ENCODE measurements at regions of chr14 and their contacts with region 1.

Region 1: GRCh38 chr14:39266871-39267591 is 33.3 kb downstream of the MIA2 start:
- DNase-seq: peak; percentile 75 to 81 (median 78)
- H3K4me3 ChIP-seq: peak overlapping the region; percentile 85 to 94
- H3K4me3 Mint-ChIP-seq: peak overlapping the region; percentile 77 to 98 (median 97)
- H3K27ac ChIP-seq: peak overlapping the region; percentile 86
- H3K27ac Mint-ChIP-seq: peak overlapping the region; percentile 91 to 99 (median 97)
- H3K4me1 ChIP-seq: peaks cover 40% of the 10 kb centered on the region
- H3K4me1 Mint-ChIP-seq: peaks cover 32 to 62% (median 49%) of the 10 kb centered on the region in 4 donors
- H3K27me3 ChIP-seq: no peaks in the 10 kb centered on the region
- H3K27me3 Mint-ChIP-seq: no peaks in the 10 kb centered on the region

Region 2: GRCh38 chr14:39102969-39103957 is 163.8 kb before region 1 on chr14 and contains the start of gene SEC23A:
- CTCF ChIA-PET with region 1: no interaction called
- POLR2A ChIA-PET with region 1: interaction called, 9 read pairs
- intact Hi-C with region 1: loop called (anchors 2 kb)
- DNase-seq: peak; percentile 80 to 88 (median 82)
- H3K4me3 ChIP-seq: peak within 1 kb of the TSS; percentile 77 to 89
- H3K4me3 Mint-ChIP-seq: peak within 1 kb of the TSS; percentile 93 to 98 (median 96)
- H3K27ac ChIP-seq: peak within 1 kb of the TSS; percentile 86
- H3K27ac Mint-ChIP-seq: peak within 1 kb of the TSS; percentile 91 to 99 (median 98)
- H3K4me1 ChIP-seq: peaks cover 50% of the 10 kb centered on the region
- H3K4me1 Mint-ChIP-seq: peaks cover 21 to 64% (median 40%) of the 10 kb centered on the region in 4 donors
- H3K27me3 ChIP-seq: no peaks in the 10 kb centered on the region
- H3K27me3 Mint-ChIP-seq: no peaks in the 10 kb centered on the region
- total RNA-seq, gene SEC23A: 61.1 to 70.3 TPM

Region 3: DNA sequence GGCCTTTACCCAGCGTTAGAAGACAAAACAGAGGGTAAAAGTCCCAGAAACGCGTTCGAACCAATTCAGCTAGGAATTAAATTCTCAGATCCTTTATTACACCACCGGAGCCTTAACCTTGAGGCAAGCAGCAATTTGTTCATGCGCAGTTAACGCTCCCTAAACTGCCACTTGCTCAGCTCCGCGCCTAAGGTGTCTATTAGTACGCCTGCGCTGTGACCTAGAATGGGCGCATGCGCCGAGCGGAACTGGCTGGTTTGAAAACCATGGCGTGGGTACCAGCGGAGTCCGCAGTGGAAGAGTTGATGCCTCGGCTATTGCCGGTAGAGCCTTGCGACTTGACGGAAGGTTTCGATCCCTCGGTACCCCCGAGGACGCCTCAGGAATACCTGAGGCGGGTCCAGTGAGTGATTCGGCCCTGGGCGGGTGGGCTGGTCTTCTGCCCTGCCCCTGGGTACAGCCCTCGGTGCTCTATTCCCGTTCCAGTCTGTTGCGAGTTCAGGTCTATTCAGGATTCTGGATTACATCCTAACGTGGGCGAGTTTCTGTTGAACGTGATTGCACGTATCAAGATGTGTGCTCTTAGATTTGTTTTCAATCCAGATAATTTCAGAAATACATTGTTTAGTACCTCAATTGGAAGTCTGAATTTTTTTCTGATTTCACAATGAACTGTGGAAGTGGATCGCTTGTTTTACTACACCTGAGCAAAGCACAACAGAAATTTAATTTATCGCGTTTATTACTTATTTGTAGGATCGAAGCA is 152.8 kb before region 1 on chr14 and contains the start of gene GEMIN2:
- CTCF ChIA-PET with region 1: no interaction called
- POLR2A ChIA-PET with region 1: interaction called, 11 read pairs
- intact Hi-C with region 1: loop called (anchors 2 kb)
- DNase-seq: peak; percentile 92 to 95 (median 94)
- H3K4me3 ChIP-seq: peak within 1 kb of the TSS; percentile 66 to 81
- H3K4me3 Mint-ChIP-seq: peak within 1 kb of the TSS; percentile 92 to 99 (median 97)
- H3K27ac ChIP-seq: peak within 1 kb of the TSS; percentile 80
- H3K27ac Mint-ChIP-seq: peak within 1 kb of the TSS; percentile 93 to 99 (median 97)
- H3K4me1 ChIP-seq: peaks cover 13% of the 10 kb centered on the region
- H3K4me1 Mint-ChIP-seq: peaks cover 12 to 25% (median 17%) of the 10 kb centered on the region in 4 donors
- H3K27me3 ChIP-seq: no peaks in the 10 kb centered on the region
- H3K27me3 Mint-ChIP-seq: peaks cover 2 to 6% of the 10 kb centered on the region in 2 donors
- total RNA-seq, gene GEMIN2: 13.4 to 16.9 TPM

Region 4: GRCh38 chr14:39169541-39169900 is 97.5 kb before region 1 on chr14:
- CTCF ChIA-PET with region 1: interaction called, 9 read pairs
- POLR2A ChIA-PET with region 1: interaction called, 56 read pairs
- intact Hi-C with region 1: loop called (anchors 1 kb)
- DNase-seq: no peak
- H3K4me3 ChIP-seq: peak overlapping the region; percentile 86 to 99
- H3K4me3 Mint-ChIP-seq: peak overlapping the region; percentile 88 to 100 (median 96)
- H3K27ac ChIP-seq: peak overlapping the region; percentile 94
- H3K27ac Mint-ChIP-seq: peak overlapping the region; percentile 93 to 100 (median 99)
- H3K4me1 ChIP-seq: peaks cover 40% of the 10 kb centered on the region
- H3K4me1 Mint-ChIP-seq: peaks cover 35 to 59% (median 48%) of the 10 kb centered on the region in 4 donors
- H3K27me3 ChIP-seq: no peaks in the 10 kb centered on the region
- H3K27me3 Mint-ChIP-seq: no peaks in the 10 kb centered on the region

Region 5: DNA sequence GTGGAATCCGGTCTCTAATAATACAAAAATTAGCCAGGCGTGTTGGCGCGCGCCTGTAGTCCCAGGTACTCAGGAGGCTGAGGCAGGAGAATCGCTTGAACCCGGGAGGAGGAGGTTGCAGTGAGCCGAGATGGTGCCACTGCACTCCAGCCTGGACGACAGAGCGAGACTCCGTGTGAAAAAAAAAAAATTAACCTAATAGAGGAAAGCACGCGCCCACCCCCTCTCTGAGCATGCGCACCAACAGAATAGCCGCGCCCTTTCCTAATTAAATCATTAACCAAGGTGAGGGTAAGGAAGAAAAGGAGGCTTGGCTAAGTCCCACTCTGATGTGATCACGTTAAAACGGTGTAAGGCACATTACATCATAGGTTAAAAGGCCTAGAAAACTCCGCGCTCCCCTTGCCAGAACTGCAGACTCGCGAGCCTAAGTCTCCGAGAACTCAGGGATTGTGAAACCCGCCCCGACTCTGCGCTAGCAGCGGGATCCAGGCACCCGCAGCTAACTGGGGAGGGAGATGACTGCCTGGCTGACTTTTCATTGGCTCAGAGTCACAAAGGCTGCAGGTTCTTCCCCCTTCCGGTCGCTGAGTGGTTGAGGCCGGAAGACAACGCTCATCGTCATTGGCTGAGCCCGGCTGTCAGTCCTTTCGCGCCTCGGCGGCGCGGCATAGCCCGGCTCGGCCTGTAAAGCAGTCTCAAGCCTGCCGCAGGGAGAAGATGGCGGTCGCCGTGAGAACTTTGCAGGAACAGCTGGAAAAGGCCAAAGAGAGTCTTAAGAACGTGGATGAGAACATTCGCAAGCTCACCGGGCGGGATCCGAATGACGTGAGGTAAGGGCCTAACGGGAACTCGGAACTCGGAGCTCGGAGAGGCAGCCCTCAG is 92.2 kb before region 1 on chr14 and contains the start of gene PNN:
- CTCF ChIA-PET with region 1: interaction called, 9 read pairs
- POLR2A ChIA-PET with region 1: interaction called, 56 read pairs
- intact Hi-C with region 1: loop called (anchors 1 kb)
- DNase-seq: peak; percentile 97 to 100 (median 99)
- H3K4me3 ChIP-seq: peak within 1 kb of the TSS; percentile 77 to 92
- H3K4me3 Mint-ChIP-seq: peak within 1 kb of the TSS; percentile 95 to 99 (median 97)
- H3K27ac ChIP-seq: peak within 1 kb of the TSS; percentile 98
- H3K27ac Mint-ChIP-seq: peak within 1 kb of the TSS; percentile 97 to 100 (median 98)
- H3K4me1 ChIP-seq: peaks cover 28% of the 10 kb centered on the region
- H3K4me1 Mint-ChIP-seq: peaks cover 18 to 54% (median 40%) of the 10 kb centered on the region in 4 donors
- H3K27me3 ChIP-seq: no peaks in the 10 kb centered on the region
- H3K27me3 Mint-ChIP-seq: no peaks in the 10 kb centered on the region
- total RNA-seq, gene PNN: 86.0 to 93.8 TPM

Region 6: DNA sequence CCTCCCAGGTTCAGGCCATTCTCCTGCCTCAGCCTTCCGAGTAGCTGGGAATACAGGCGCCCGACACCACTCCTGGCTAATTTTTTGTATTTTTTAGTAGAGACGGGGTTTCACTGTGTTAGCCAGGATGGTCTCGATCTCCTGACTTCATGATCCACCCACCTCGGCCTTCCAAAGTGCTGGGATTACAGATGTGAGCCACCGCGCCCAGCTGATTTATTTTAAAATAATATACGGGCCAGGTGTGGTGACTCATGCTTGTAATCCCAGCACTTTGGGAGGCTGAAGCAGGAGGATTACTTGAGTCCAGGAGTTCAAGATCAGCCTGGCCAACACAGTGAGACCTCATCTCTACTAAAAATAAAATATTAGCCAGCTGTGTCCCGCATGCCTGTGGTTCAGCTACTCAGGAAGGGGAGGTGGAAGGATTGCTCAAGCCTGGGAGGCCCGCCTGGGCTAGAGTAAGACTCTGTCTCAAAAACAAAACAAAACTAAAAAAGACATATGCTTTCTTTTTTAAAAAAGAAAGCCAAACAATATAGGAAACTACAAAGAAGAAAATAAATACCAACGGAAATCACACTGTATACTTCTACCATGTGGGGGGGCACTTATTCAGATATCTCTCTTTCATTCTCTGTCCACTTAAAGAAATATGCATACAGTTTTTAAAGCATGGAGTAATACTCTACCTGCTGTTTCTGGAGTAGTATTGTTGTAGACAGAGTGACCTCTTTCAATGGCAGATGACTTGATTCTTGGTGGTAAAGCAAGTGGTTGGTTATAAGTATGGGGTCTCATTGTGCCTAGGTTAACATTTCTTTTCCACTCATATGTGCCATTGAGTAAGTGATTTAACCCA is 34.2 kb before region 1 on chr14:
- CTCF ChIA-PET with region 1: interaction called, 8 read pairs
- POLR2A ChIA-PET with region 1: interaction called, 35 read pairs
- intact Hi-C with region 1: loop called (anchors 1 kb)
- DNase-seq: peak in 2 of 5 donors; percentile 4 to 10
- H3K4me3 ChIP-seq: no peak overlapping the region
- H3K4me3 Mint-ChIP-seq: peak overlapping the region in 3 of 8 donors; percentile 40 to 60 (median 43)
- H3K27ac ChIP-seq: no peak overlapping the region
- H3K27ac Mint-ChIP-seq: peak overlapping the region in 5 of 7 donors; percentile 28 to 75 (median 63)
- H3K4me1 ChIP-seq: peaks cover 35% of the 10 kb centered on the region
- H3K4me1 Mint-ChIP-seq: peaks cover 24 to 37% (median 31%) of the 10 kb centered on the region in 4 donors
- H3K27me3 ChIP-seq: no peaks in the 10 kb centered on the region
- H3K27me3 Mint-ChIP-seq: no peaks in the 10 kb centered on the region

Region 7: GRCh38 chr14:39310051-39310450 is 43.0 kb after region 1 on chr14:
- CTCF ChIA-PET with region 1: no interaction called
- POLR2A ChIA-PET with region 1: no interaction called
- intact Hi-C with region 1: loop called (anchors 5 kb)
- DNase-seq: no peak
- H3K4me3 ChIP-seq: no peak overlapping the region
- H3K4me3 Mint-ChIP-seq: no peak overlapping the region
- H3K27ac ChIP-seq: no peak overlapping the region
- H3K27ac Mint-ChIP-seq: no peak overlapping the region
- H3K4me1 ChIP-seq: no peaks in the 10 kb centered on the region
- H3K4me1 Mint-ChIP-seq: peaks cover 0 to 5% (median 2%) of the 10 kb centered on the region in 4 donors
- H3K27me3 ChIP-seq: no peaks in the 10 kb centered on the region
- H3K27me3 Mint-ChIP-seq: no peaks in the 10 kb centered on the region

Measured in CD4-positive, alpha-beta memory T cell (primary cell).